Esophagus muscularis mucosa (tissue), 4 donors: ENCODE measurements at regions of chr15 and their contacts with region 1.

Region 1: DNA sequence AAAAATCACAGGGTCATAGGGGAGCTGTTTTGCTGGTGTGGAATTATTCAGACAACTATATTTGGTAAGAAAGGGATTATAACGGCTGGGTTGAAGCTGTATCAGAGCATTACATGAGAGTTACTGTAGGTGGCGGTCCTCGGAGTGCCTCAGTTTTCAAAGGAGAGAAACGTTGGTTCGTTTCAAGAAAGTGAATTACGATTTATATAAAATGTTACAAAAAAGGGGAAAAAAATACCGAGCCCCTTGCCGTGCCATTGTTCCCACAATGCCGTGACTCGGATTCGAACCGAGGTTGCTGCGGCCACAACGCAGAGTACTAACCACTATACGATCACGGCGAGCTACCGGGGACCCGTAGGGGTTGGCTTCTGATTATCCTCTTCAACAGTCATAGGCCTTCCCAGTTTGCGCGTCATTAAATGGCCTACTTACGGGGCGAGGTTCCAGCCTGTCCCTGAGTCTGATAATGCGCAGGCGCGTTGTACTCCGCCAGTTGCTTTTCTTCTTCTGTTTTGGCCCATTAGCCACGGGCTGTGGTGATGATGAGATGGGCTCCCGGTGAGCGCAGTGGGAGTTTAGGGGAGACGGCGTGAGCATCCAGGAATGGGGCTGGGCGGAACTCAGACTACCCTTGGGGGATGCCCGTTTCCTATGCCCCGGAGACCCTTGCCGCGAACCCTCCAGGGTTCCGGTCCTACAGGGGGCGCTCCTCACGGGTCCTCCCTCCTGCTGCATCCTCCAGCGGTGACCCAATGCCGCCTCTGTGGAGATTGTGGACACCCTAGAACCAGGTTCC is 10.8 kb upstream of the SHF start:
- DNase-seq: peak; percentile 100
- H3K4me3 ChIP-seq: peak overlapping the region; percentile 69 to 80 (median 72)
- H3K27ac ChIP-seq: peak overlapping the region; percentile 89 to 99 (median 94)
- H3K4me1 ChIP-seq: peaks cover 7 to 16% (median 12%) of the 10 kb centered on the region in 4 donors
- H3K27me3 ChIP-seq: no peaks in the 10 kb centered on the region
- CTCF ChIP-seq: peak; percentile 59 to 76 (median 62)
- EP300 ChIP-seq: no peak
- POLR2A ChIP-seq: peak; percentile 93

Region 2: DNA sequence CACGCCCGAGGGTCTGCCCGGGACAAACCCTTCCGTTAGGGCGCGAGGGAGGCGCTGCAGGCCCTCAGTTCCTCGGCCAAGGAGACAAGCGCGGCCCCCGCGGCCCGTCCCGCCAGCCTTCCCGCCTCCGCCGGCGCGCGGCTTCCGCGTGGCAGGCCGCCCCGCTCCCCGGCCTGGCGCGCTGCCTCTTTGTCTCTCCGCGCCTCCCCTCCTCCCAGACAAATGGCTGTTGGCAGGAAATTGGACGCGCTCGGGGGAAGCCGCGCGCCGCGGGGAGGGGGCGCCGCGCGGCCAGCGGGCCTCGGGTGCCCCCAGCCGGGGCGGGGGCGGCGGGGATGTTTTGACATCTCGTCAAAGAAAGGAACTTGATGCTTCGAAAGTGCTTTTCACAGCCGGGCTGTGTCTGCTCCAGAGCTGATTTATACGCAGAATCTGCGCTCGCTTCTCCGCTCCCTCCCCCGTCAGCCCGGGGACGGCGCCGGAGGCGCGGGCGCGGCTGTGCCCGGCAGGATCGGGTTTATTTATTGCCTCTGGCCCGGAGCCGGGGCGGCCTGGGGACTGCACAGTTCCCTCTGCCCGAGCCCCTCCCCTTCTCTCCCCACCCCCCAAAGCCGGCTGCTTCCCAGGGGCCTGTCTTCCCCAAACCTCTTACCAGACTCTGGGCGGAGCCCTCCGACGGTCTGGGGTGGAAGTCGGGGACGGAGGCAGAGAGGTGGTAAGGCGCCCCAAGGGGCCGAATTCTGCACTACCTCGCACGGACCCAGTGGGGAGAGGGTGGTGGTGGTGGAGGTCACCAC is 31.5 kb before region 1 on chr15:
- intact Hi-C with region 1: loop called (anchors 2 kb)
- DNase-seq: peak; percentile 95
- H3K4me3 ChIP-seq: peak overlapping the region; percentile 69 to 87 (median 82)
- H3K27ac ChIP-seq: peak overlapping the region; percentile 98 to 100 (median 98)
- H3K4me1 ChIP-seq: peaks cover 17 to 47% (median 37%) of the 10 kb centered on the region in 4 donors
- H3K27me3 ChIP-seq: no peaks in the 10 kb centered on the region
- CTCF ChIP-seq: peak; percentile 30 to 78 (median 46)
- EP300 ChIP-seq: no peak
- POLR2A ChIP-seq: no peak

Region 3: DNA sequence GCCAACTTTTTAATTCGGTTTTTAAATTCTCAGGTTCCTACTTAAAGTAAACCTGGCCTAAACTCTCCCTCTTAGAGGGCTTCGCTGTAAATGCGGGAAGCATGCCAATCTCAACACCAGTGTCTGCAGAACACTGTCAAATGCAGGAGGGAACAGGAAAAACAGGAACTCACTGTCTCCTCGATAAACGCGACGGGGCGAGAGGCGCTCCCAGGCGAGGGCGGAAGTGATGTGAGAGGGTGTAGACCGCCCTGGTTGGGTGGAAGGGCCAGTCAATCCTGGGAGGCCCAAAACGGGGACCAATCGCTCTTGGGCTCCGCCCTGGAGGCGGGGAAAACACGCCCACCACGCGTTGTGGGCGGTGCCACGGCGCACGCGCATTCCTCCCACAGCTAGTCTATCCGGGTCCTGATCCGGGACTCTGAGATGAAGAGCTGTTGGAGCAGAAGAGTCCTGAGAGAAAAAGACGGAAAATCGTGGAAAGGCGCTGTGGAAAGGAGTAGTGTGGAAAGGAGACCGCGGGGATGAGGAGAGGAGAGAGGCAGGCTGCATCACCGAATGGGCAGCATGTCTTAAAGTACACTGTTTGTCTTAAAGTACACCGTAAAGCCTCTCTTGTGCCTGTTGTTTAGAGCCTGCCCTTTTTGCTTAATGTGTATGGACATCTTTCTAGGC is 80.6 kb after region 1 on chr15:
- intact Hi-C with region 1: loop called (anchors 2 kb)
- DNase-seq: peak; percentile 100
- H3K4me3 ChIP-seq: peak overlapping the region; percentile 63 to 82 (median 66)
- H3K27ac ChIP-seq: peak overlapping the region; percentile 82 to 88 (median 87)
- H3K4me1 ChIP-seq: peaks cover 10 to 17% (median 15%) of the 10 kb centered on the region in 4 donors
- H3K27me3 ChIP-seq: no peaks in the 10 kb centered on the region
- CTCF ChIP-seq: no peak
- EP300 ChIP-seq: no peak
- POLR2A ChIP-seq: peak; percentile 63

Region 4: DNA sequence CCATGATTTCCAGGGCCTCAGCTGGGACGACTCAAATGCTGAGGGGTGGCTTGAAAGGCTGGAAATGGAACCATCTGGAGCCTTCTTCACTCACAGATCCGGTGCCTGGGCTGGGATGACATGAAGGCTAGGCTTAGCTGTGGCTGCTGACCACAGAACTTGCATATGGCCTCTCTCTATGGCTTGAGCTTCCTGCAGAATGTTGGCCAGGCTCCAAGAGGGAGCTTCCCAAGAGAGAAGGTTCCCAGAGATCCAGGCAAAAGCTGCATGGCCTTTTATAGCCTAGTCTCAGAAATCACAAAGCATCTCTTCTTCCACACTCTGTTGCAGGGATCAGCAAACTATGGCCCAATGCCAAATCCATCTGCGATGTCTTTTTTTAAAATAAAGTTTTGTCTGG is 135.0 kb after region 1 on chr15:
- intact Hi-C with region 1: no loop called
- DNase-seq: no peak
- H3K4me3 ChIP-seq: no peak overlapping the region
- H3K27ac ChIP-seq: no peak overlapping the region
- H3K4me1 ChIP-seq: peaks cover 0 to 12% (median 8%) of the 10 kb centered on the region in 4 donors
- H3K27me3 ChIP-seq: peaks cover 0 to 6% (median 0%) of the 10 kb centered on the region in 4 donors
- CTCF ChIP-seq: no peak
- EP300 ChIP-seq: no peak
- POLR2A ChIP-seq: no peak

Region 5: DNA sequence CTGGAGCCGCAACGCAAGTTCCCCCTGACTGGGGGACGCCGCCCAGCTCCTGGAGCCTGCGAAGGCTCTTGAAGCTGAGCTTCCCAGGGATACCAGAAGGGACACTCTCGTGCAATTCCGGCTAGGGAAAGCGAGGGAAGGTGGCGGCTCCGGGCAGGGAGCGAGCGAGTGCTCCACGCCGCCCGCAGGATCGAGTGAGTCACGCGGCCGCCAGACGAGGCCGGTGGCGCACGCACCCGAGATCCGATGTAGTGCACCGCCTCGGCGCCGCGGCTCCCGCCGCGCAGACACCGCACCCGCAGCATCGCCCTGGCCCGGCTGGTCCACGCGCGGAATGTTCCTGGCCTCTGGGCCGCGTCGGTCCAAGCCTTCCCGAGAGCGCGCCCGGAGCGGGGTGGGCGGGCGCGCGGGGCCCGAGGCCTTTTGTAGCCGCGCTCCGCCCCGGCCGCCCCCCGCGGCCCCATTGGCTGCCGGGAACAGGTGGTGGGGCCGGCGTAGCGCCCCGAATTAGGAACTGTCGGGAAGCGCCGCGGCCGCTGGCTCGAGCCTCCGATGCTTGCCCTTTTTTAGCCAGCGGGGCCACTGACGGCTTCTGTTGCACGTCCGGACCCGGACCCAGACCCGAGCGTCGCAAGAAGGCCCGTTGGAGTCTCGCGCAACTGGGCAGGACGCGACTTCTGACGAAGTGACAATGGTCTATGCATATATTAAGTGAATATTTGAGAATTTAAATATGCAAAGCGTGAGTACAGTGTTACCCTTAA is 179.8 kb after region 1 on chr15 and contains the start of gene GATM:
- intact Hi-C with region 1: loop called (anchors 5 kb)
- DNase-seq: peak; percentile 93
- H3K4me3 ChIP-seq: peak within 1 kb of the TSS; percentile 67 to 71 (median 69)
- H3K27ac ChIP-seq: peak within 1 kb of the TSS; percentile 81 to 91 (median 86)
- H3K4me1 ChIP-seq: peaks cover 12 to 41% (median 29%) of the 10 kb centered on the region in 4 donors
- H3K27me3 ChIP-seq: no peaks in the 10 kb centered on the region
- CTCF ChIP-seq: peak in 2 of 3 experiments; percentile 12 to 65
- EP300 ChIP-seq: no peak
- POLR2A ChIP-seq: no peak
- total RNA-seq, gene GATM: 21.7 to 34.2 (median 24.4) TPM